AG04449 (cell line): ENCODE measurements at regions of chrX and their contacts with region 1.

Region 1: GRCh38 chrX:46686003-46686645 is 72.8 kb downstream of the SLC9A7 start:
- DNase-seq: no peak
- H3K4me3 ChIP-seq: no peak overlapping the region
- CTCF ChIP-seq: peak; percentile 38

Region 2: DNA sequence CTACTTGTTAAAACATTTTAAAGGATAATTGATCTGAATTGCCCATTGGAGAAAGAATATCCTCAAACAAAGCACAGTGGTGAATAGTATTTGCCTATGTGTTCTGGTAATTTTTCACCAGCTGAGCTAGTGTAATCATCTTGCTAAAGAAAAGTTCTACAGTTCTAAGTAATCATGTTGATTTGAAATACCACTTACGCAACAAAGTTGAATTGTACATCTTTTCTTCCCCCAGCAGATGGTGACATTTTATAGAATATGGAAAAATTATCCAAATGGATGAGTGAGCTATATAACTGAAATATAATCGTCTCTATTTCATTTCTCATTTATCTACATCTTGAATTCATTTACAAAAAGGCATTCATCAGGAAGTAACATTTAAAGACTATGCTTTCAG is 131.2 kb before region 1 on chrX:
- CTCF ChIA-PET with region 1: interaction called, 11 read pairs
- POLR2A ChIA-PET with region 1: no interaction called
- DNase-seq: no peak
- H3K4me3 ChIP-seq: no peak overlapping the region
- CTCF ChIP-seq: no peak

Region 3: DNA sequence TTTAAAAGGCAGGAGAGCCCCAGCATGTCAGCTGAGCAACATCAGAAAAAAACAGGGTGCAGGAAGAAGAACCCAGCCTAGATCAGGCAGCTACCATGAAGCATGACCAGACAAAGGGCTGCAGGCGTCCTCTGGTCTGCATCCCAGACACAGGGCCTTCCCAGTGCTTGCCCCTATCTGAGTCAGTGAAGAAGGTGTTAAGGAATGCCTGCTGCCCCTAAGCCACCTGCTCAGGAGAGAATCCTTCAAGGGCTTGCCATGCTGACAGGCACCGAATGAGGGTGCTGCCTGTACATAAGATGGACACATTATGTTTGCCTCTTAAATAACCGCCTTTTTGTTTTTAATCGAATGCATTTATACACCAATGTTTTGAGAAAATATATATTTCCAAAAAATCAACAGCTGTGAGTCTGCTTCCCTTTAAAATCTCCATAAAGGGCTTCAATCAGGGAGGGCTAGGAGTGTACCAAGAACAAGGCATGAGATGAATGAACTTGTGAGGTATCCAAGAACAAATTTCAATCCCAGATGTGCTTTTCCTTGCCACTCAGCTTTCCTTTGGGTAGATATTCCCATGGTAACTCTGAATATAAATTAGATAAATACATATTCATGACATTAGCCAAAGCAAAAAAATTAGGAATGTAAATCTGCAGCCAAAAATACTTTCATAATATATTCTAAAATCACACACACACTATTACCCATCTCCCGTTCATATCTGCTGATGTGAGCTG is 12.3 kb before region 1 on chrX:
- CTCF ChIA-PET with region 1: interaction called, 13 read pairs
- POLR2A ChIA-PET with region 1: no interaction called
- DNase-seq: no peak
- H3K4me3 ChIP-seq: no peak overlapping the region
- CTCF ChIP-seq: no peak

Region 4: DNA sequence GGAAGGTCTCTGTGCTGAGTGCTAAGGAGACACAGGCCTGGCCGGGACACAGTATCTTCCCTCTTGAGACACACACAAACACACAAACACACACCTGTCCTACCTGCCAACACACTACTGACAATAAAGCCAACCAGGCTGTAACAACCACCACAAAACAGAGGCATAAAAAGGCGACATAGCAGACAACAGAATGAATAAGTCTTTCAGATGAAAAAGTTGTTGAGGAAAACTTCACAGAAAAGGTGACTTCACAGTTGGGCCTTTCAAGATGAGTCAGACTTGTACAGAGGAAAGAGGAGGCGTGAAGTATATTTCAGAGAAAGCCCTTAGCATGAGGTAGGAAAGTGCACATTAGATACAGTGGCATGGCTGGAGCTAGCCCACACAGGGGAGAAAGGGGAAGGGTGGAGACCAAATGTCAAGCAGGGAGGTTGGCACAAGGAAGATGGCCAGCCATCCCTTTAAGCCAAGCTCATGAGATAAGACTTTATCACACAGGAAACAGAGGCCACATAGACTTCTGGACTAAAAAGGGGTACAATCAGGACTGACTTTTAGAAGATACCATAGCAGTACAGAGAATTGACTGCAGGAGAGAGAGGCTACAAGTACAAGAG is 18.8 kb after region 1 on chrX:
- CTCF ChIA-PET with region 1: interaction called, 16 read pairs
- POLR2A ChIA-PET with region 1: no interaction called
- DNase-seq: no peak
- H3K4me3 ChIP-seq: no peak overlapping the region
- CTCF ChIP-seq: no peak

Region 5: DNA sequence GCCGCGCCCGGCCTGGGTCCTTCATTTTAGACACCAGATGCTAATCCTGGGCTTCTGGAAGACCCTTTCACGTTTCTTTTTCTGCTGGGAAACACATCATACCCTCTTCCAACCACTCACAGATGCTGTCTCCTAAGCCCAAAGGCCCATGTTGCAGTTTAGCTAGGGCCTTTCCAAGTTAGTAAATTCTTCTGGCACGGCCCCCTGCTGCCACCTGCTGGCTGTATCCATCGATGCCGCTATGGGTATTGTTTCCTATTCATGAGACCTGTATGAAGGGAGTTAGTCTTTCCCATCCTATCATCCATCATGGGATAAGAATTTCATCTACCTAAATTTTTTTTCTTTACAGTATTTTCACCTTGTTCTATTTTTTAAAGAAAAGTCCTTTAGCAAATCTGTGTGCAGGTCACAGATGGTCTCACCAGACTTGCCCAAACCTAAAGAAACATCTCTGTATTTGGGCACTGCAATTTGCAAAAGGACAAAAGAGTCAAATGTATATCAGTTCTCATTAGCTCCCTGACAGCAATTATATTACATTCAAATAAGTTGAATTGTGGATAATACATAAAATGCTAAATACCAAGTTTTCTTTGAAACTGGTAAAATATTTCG is 110.6 kb after region 1 on chrX:
- CTCF ChIA-PET with region 1: interaction called, 11 read pairs
- POLR2A ChIA-PET with region 1: no interaction called
- DNase-seq: no peak
- H3K4me3 ChIP-seq: no peak overlapping the region
- CTCF ChIP-seq: peak; percentile 57